ENCODE measurements at regions of chr14 and their contacts with region 1.

Region 1: DNA sequence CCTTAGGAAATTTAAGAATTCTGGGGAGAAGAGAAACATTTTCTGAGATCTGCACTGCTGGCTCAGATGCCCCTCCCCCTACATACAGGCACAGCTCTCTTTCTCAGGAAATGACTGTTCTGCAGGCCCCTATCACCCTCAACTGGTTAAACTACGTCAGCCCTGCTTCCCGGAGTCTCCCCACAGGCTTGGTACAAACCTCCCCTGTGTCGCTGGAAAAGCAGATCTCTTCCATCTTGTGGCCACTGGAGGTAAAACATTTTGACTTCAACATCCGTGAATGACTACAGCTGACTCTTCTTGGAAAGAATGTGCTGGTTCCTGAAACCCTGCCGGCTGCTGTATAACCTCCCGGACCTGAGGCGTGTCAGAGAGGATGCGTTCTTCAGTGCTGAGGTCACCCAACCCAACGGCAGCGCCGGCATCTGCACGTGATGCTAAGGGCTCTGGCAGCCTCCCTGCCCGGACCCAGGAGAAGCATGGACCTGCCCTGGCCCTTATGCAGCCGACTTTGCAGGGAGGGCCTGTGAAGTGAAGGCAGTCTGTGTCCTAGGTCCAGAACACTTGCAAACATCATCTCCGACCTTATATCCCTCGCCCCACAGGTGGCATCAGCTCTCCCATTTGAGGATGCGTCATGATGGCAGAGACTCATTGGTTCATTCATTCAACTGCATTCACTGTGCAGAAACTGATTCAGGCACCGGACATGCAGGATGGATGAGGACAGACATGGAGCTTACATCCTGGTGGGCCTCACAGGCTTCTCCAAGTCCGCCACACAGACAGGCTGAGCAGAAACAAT is 129.3 kb downstream of the GCH1 start:
- DNase-seq: peak; percentile 95
- H3K4me3 Mint-ChIP-seq: peak overlapping the region; percentile 44
- H3K27ac Mint-ChIP-seq: peak overlapping the region; percentile 84
- H3K4me1 Mint-ChIP-seq: peaks cover 51% of the 10 kb centered on the region
- H3K27me3 Mint-ChIP-seq: no peaks in the 10 kb centered on the region

Region 2: GRCh38 chr14:54366736-54367735 is 406.3 kb before region 1 on chr14:
- CTCF ChIA-PET with region 1: no interaction called
- intact Hi-C with region 1: loop called (anchors 1 kb)
- DNase-seq: peak; percentile 53
- H3K4me3 Mint-ChIP-seq: no peak overlapping the region
- H3K27ac Mint-ChIP-seq: no peak overlapping the region
- H3K4me1 Mint-ChIP-seq: no peaks in the 10 kb centered on the region
- H3K27me3 Mint-ChIP-seq: peaks cover 3% of the 10 kb centered on the region

Region 3: DNA sequence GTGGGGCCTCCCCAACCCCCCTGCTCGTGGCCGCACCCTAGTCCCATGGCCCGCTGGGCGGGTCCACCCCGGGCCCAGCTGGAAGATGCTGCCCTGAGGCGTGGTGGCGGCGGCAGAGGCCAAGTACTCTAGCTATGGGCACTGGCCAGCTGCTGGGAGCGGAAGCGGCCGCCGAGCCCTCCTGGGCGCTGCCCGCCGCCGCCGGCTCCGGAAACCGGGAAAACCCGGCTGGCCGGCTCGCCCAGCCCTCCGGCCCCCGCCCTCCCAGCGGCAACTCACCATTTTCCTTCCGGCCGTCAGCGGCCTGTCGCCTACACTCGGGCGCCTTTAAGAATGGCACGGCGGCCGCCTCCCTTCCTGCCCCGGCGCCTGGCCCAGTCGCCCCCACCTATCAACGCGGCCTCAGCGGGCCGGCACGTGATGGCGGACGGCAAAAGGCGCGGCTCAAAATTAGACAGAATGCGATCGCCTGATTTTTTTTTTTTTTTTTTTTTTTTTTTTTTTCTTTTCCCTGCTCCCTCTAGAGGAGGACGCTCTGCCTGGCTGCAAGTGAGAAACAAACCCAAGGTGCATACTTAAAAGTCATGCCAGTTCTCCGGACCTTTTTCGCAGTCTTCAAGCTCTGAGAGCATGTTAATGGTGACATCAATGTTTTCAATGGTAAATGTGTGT is 284.6 kb before region 1 on chr14 and contains the start of gene GMFB:
- CTCF ChIA-PET with region 1: interaction called, 8 read pairs
- intact Hi-C with region 1: loop called (anchors 2 kb)
- DNase-seq: peak; percentile 91
- H3K4me3 Mint-ChIP-seq: peak within 1 kb of the TSS; percentile 85
- H3K27ac Mint-ChIP-seq: peak within 1 kb of the TSS; percentile 88
- H3K4me1 Mint-ChIP-seq: peaks cover 54% of the 10 kb centered on the region
- H3K27me3 Mint-ChIP-seq: no peaks in the 10 kb centered on the region
- total RNA-seq, gene GMFB: 29.5 to 33.4 TPM

Region 4: GRCh38 chr14:54627540-54628363 is 145.6 kb before region 1 on chr14:
- CTCF ChIA-PET with region 1: interaction called, 12 read pairs
- intact Hi-C with region 1: loop called (anchors 1 kb)
- DNase-seq: peak; percentile 62
- H3K4me3 Mint-ChIP-seq: peak overlapping the region; percentile 61
- H3K27ac Mint-ChIP-seq: peak overlapping the region; percentile 86
- H3K4me1 Mint-ChIP-seq: peaks cover 57% of the 10 kb centered on the region
- H3K27me3 Mint-ChIP-seq: no peaks in the 10 kb centered on the region

Region 5: GRCh38 chr14:54697803-54698202 is 75.6 kb before region 1 on chr14:
- CTCF ChIA-PET with region 1: interaction called, 20 read pairs
- intact Hi-C with region 1: no loop called
- DNase-seq: no peak
- H3K4me3 Mint-ChIP-seq: no peak overlapping the region
- H3K27ac Mint-ChIP-seq: no peak overlapping the region
- H3K4me1 Mint-ChIP-seq: peaks cover 8% of the 10 kb centered on the region
- H3K27me3 Mint-ChIP-seq: peaks cover 4% of the 10 kb centered on the region

Region 6: GRCh38 chr14:54737132-54737711 is 36.2 kb before region 1 on chr14:
- CTCF ChIA-PET with region 1: interaction called, 11 read pairs
- intact Hi-C with region 1: loop called (anchors 1 kb)
- DNase-seq: peak; percentile 36
- H3K4me3 Mint-ChIP-seq: no peak overlapping the region
- H3K27ac Mint-ChIP-seq: no peak overlapping the region
- H3K4me1 Mint-ChIP-seq: peaks cover 31% of the 10 kb centered on the region
- H3K27me3 Mint-ChIP-seq: no peaks in the 10 kb centered on the region

Region 7: DNA sequence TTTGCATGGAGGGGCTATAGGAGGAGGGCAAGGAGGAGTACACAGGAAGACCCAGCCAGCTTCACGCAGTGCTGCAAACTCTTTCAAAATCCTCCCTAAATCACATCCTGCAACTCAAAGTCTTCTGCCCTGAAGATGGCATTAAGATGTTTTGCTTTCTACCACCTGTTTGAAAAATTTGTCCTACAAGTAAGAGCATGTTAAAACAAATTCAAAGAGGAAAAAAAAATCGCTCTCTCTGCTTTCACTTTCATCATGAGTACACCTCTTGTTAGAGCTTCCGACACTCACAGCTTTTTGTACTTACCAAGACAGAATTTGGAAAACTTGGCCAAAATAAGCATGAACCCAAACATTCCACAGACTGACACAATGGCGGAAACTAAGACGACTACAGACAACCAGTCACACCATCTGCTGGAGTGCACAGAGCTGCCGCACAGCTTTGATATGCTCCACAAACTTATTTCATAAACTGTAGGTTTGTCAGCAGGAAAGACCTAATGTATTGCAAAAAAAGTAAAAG is 107.9 kb after region 1 on chr14:
- CTCF ChIA-PET with region 1: interaction called, 3 read pairs
- intact Hi-C with region 1: loop called (anchors 1 kb)
- DNase-seq: peak; percentile 38
- H3K4me3 Mint-ChIP-seq: peak overlapping the region; percentile 78
- H3K27ac Mint-ChIP-seq: peak overlapping the region; percentile 96
- H3K4me1 Mint-ChIP-seq: peaks cover 34% of the 10 kb centered on the region
- H3K27me3 Mint-ChIP-seq: no peaks in the 10 kb centered on the region

Region 8: DNA sequence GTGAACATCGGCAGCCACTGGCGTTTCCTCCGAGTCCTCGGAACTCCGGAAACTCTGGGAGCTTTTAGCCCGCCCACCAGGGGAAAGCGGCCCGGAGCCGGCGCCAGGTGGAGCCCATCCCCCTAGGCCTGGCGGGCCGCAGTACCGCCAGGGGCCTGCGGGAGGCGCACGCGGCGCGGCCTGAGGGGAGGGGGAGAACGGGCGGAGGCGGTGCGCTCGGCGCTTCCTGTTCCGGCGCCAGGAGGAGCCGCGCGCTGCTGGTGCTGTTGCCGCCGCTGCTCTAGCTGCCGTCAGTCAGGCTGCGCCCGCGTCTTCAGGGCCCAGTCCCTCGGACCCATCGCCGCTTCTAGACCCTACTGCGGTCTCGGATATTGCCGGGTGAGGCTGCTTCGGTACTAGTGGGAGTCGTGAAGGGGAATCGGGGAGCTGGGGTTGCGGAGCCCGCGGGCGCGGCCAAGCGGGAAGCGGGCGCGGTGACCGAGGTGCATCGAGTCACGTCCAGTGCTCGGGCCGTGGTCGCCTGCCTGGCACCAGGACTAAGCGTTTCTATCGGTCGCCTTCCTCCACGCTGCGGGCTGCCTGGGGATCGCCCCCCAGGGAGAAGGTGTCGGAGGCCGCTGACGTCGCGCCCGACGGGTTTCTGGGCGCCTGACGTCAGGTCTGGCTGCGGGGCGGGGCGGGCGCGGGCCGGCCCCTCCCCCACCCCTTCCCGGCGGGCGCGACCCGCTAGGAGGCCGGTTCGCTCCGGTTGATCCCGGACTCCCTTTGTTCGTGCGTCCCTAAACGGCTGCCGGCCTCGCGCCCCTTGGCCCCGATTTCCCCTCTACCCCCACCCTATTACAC is 278.3 kb after region 1 on chr14 and contains the start of gene MAPK1IP1L:
- CTCF ChIA-PET with region 1: no interaction called
- intact Hi-C with region 1: no loop called
- DNase-seq: peak; percentile 90
- H3K4me3 Mint-ChIP-seq: peak within 1 kb of the TSS; percentile 86
- H3K27ac Mint-ChIP-seq: peak within 1 kb of the TSS; percentile 95
- H3K4me1 Mint-ChIP-seq: peaks cover 42% of the 10 kb centered on the region
- H3K27me3 Mint-ChIP-seq: no peaks in the 10 kb centered on the region
- total RNA-seq, gene MAPK1IP1L: 78.2 to 83.4 TPM